Mammary epithelial cell (primary cell): ENCODE measurements at regions of chr7 and their contacts with region 1.

Region 1: GRCh38 chr7:120792091-120792860 is 65.7 kb downstream of the TSPAN12 start:
- DNase-seq: peak; percentile 40
- H3K4me3 ChIP-seq: no peak overlapping the region
- H3K27ac ChIP-seq: no peak overlapping the region
- H3K4me1 ChIP-seq: peaks cover 7% of the 10 kb centered on the region
- H3K27me3 ChIP-seq: peaks cover 2% of the 10 kb centered on the region
- CTCF ChIP-seq: peak; percentile 71 to 75

Region 2: DNA sequence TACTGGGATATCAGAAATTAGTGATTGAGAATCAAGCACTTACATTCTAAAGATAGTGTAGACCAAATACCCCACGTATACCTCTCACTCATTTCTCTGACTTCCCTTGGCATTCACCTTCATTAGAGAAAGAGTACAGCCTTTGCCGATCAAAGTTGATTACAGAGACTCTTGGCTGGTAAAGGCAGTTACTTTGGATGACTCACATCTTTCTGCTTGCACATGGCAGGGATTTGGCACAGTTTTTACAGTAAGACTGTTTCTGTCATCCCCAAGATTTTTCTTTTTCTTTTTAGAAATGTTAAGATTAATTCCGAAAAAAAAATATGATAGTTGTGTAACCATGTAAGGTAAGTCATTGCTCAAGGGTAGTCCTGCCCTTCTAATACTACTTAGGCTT is 77.3 kb before region 1 on chr7:
- CTCF ChIA-PET with region 1: no interaction called
- dilution Hi-C with region 1: no loop called
- in situ Hi-C with region 1: no loop called
- intact Hi-C with region 1: no loop called
- DNase-seq: no peak
- H3K4me3 ChIP-seq: no peak overlapping the region
- H3K27ac ChIP-seq: no peak overlapping the region
- H3K4me1 ChIP-seq: no peaks in the 10 kb centered on the region
- H3K27me3 ChIP-seq: no peaks in the 10 kb centered on the region
- CTCF ChIP-seq: no peak

Region 3: DNA sequence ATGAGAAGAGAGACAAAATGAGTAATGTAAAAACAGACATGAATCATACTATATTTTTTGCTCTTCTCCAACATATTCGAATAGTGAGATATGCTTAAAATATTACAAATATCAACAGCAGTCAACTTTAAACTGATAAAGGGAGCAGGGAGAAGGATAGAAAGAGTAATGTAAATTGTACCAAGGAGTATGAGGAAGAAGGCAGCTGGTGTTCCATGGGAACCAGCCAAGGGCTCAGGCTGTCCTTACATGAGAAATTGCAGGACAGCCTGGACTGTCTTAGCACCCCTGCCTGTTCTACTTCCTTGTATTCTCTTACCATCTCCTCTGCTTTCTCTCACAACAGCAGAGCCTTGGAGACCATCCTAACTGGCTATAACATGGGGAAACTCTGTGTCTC is 63.0 kb before region 1 on chr7:
- CTCF ChIA-PET with region 1: no interaction called
- dilution Hi-C with region 1: no loop called
- in situ Hi-C with region 1: no loop called
- intact Hi-C with region 1: no loop called
- DNase-seq: no peak
- H3K4me3 ChIP-seq: no peak overlapping the region
- H3K27ac ChIP-seq: no peak overlapping the region
- H3K4me1 ChIP-seq: no peaks in the 10 kb centered on the region
- H3K27me3 ChIP-seq: no peaks in the 10 kb centered on the region
- CTCF ChIP-seq: no peak

Region 4: GRCh38 chr7:120740348-120740747 is 51.9 kb before region 1 on chr7:
- CTCF ChIA-PET with region 1: no interaction called
- dilution Hi-C with region 1: no loop called
- in situ Hi-C with region 1: no loop called
- intact Hi-C with region 1: no loop called
- DNase-seq: no peak
- H3K4me3 ChIP-seq: no peak overlapping the region
- H3K27ac ChIP-seq: no peak overlapping the region
- H3K4me1 ChIP-seq: no peaks in the 10 kb centered on the region
- H3K27me3 ChIP-seq: no peaks in the 10 kb centered on the region
- CTCF ChIP-seq: no peak

Region 5: DNA sequence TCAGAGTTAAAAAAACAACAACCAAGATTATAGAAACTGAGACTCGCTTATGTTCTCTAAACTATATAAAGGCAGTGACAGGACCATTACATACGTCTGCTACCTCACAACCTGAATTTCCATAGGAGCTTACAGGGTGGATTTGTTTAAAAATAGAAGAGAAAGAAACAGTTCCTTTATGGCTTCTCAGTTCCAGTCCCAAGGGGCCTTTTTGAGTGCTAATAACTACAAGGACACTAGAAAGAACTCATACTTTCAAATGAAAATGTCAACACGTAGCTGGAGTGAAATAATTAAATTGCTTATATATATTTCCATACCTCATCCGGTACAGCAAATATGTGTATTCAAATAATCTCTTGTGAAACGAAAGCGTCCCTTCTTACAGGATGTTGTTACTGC is 46.0 kb after region 1 on chr7:
- CTCF ChIA-PET with region 1: no interaction called
- dilution Hi-C with region 1: no loop called
- in situ Hi-C with region 1: no loop called
- intact Hi-C with region 1: no loop called
- DNase-seq: no peak
- H3K4me3 ChIP-seq: no peak overlapping the region
- H3K27ac ChIP-seq: no peak overlapping the region
- H3K4me1 ChIP-seq: no peaks in the 10 kb centered on the region
- H3K27me3 ChIP-seq: no peaks in the 10 kb centered on the region
- CTCF ChIP-seq: no peak

Region 6: GRCh38 chr7:120941064-120941463 is 148.8 kb after region 1 on chr7:
- CTCF ChIA-PET with region 1: interaction called, 3 read pairs
- dilution Hi-C with region 1: no loop called
- in situ Hi-C with region 1: no loop called
- intact Hi-C with region 1: loop called (anchors 2 kb)
- DNase-seq: no peak
- H3K4me3 ChIP-seq: no peak overlapping the region
- H3K27ac ChIP-seq: no peak overlapping the region
- H3K4me1 ChIP-seq: no peaks in the 10 kb centered on the region
- H3K27me3 ChIP-seq: no peaks in the 10 kb centered on the region
- CTCF ChIP-seq: peak; percentile 18 to 20

Region 7: DNA sequence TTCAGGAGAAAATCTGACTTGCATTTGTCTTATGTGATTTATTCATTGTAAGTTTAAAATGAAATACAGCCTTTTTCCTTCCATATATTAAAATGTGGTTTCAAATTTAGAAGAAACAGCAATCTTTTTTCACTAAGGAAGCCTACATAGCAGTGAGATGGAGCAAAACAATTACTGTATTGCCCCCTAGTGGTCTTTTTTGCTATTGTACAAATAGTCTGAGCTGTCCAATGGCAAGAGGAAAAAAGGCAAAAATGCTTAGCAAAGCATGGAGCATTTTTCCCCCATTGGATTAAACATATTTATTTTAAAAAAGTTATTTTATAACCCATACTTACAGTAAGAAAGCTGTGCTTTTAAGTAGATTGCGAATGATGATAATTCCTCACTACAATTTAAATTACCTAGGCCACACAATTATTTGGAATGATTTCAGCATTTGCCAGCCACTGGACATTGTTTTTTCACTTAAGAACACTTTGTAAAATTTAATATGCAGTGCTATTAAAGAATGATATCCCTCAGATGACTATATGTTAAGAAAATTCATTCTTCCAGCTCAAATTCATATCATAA is 315.7 kb after region 1 on chr7:
- CTCF ChIA-PET with region 1: no interaction called
- dilution Hi-C with region 1: no loop called
- in situ Hi-C with region 1: no loop called
- intact Hi-C with region 1: loop called (anchors 2 kb)
- DNase-seq: peak; percentile 50
- H3K4me3 ChIP-seq: no peak overlapping the region
- H3K27ac ChIP-seq: no peak overlapping the region
- H3K4me1 ChIP-seq: peaks cover 3% of the 10 kb centered on the region
- H3K27me3 ChIP-seq: no peaks in the 10 kb centered on the region
- CTCF ChIP-seq: peak; percentile 75 to 78